Panc1 (cell line): ENCODE measurements at regions of chr12 and their contacts with region 1.

Region 1: DNA sequence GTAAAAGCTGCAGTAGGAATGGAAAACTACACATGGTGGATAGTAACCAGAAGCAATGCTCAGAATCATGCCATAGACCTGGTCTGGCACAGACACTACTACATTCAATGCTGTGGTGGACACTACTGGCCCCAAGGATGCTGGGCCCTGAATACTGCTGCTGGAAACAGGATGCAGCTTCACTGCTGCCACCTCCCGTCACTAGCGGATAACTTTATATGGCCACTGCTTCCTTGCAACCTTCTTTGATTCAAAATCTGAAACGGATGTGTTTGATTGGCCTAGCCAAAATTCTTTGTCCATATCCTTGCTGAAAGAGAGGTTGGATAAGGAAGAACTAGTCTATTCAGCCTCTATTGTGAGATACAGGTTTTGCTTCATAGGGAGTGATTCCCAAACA is 30.7 kb downstream of the ADCY6 start:
- DNase-seq: no peak
- ATAC-seq: peak; percentile 58
- H3K4me3 ChIP-seq: no peak overlapping the region
- H3K27ac ChIP-seq: no peak overlapping the region
- H3K4me1 ChIP-seq: no peaks in the 10 kb centered on the region
- H3K27me3 ChIP-seq: no peaks in the 10 kb centered on the region
- CTCF ChIP-seq: no peak

Region 2: DNA sequence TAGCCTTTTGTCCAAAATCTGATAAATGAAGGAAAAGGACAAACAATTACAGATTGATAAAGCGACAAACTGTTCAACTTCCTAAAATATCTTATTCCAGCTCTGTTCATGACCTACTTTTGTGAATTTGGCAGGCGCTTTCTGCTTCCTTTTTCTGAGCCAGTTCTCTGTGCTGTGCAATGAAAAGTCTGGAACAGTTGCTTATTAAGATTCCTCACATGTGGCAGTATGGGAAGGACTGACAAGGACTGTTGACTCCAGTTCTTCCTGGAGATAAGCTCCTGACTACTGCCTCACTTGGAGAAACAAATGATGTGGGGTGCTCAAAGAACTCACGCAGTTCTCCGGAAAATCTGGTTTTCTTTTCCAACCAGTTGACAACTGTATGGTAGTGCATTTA is 344.2 kb before region 1 on chr12:
- CTCF ChIA-PET with region 1: no interaction called
- POLR2A ChIA-PET with region 1: no interaction called
- in situ Hi-C with region 1: no loop called
- intact Hi-C with region 1: no loop called
- DNase-seq: no peak
- ATAC-seq: no peak
- H3K4me3 ChIP-seq: no peak overlapping the region
- H3K27ac ChIP-seq: no peak overlapping the region
- H3K4me1 ChIP-seq: no peaks in the 10 kb centered on the region
- H3K27me3 ChIP-seq: peaks cover 19% of the 10 kb centered on the region
- CTCF ChIP-seq: no peak

Region 3: DNA sequence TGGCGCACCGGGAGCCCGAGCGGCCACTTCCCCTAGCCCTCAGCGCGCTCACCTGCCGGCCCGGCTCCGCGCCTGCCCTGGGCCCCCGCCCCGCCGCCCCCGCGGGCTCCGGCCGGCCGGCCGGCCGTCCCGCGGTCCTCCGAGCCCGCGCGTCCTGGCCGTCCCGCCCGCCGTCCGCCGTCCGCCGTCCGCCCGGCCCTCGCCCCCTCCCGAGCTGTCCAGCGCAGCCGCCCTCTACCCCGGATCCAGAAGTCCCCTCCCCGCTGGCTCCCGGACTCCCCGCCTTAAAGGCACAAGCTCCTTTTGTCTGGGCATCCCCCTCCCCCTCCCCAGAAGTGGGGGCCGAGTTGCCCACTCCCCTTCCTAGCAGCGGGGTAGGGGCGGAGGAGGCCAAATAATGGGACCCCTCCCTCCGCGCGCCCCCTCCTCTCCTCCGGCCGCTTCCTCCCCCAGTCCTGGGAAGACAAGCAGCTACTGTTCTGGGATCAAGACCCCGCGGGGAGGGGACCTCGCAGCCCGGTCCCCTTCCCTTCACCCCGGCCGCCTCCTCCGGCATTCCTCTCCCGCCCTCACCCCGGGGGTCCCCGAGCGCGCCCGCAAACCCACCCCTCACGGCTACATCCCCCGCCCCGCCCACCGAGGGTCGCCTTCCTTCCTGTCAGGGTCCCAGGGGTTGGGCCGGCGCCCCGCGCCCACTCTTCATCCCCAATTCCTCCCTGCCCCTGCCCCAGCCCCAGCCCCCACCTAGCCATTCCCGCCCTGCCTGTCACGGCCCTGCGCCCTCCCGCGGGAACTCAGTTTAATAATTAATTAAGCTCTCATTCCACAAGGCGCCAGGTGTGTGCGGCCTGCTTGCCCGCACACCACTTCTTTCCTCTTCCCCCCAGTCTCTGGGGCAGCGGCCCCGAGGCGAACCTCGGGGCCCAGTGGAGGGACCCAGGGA is 30.9 kb after region 1 on chr12 and contains the start of gene ADCY6:
- CTCF ChIA-PET with region 1: interaction called, 51 read pairs
- POLR2A ChIA-PET with region 1: no interaction called
- in situ Hi-C with region 1: no loop called
- intact Hi-C with region 1: loop called (anchors 2 kb)
- DNase-seq: no peak
- ATAC-seq: peak; percentile 86
- H3K4me3 ChIP-seq: peak within 1 kb of the TSS; percentile 61 to 70
- H3K27ac ChIP-seq: peak within 1 kb of the TSS; percentile 70
- H3K4me1 ChIP-seq: peaks cover 3% of the 10 kb centered on the region
- H3K27me3 ChIP-seq: no peaks in the 10 kb centered on the region
- CTCF ChIP-seq: no peak
- total RNA-seq, gene ADCY6: 24.1 TPM

Region 4: GRCh38 chr12:48795480-48796455 is 37.5 kb after region 1 on chr12:
- CTCF ChIA-PET with region 1: interaction called, 51 read pairs
- POLR2A ChIA-PET with region 1: no interaction called
- in situ Hi-C with region 1: no loop called
- intact Hi-C with region 1: loop called (anchors 2 kb)
- DNase-seq: peak; percentile 79
- ATAC-seq: peak; percentile 95
- H3K4me3 ChIP-seq: peak overlapping the region in 1 of 2 experiments; percentile 2; a peak in 1 of 4 replicates
- H3K27ac ChIP-seq: no peak overlapping the region
- H3K4me1 ChIP-seq: no peaks in the 10 kb centered on the region
- H3K27me3 ChIP-seq: no peaks in the 10 kb centered on the region
- CTCF ChIP-seq: peak; percentile 92

Region 5: DNA sequence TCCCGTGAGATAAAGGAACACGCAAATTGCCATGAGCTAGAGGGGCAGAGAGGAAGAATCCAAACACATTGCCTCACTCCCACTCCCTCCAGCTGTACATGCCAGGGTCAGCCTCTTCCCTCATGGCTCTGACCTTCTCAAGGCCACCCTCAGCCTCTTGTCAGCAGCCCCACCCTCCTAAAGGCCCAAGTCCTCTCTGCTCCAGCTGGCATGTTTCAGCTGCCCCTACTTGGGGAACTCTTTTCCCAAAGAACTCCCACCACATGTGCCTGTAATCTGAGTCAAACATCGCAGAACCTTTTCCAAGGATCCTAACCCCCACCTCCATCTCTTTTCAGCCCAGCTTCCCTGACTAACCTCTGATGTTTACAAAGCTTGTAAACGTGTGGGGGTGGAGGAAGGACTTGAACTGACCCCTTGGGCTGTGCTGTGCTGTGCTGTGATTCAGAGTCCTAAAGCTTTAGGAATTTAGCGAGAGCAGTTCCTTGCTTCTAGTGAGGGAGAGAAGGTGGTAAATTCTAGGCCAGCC is 52.7 kb after region 1 on chr12:
- CTCF ChIA-PET with region 1: interaction called, 10 read pairs
- POLR2A ChIA-PET with region 1: no interaction called
- in situ Hi-C with region 1: no loop called
- intact Hi-C with region 1: no loop called
- DNase-seq: no peak
- ATAC-seq: no peak
- H3K4me3 ChIP-seq: no peak overlapping the region
- H3K27ac ChIP-seq: no peak overlapping the region; the same call in 1 of the 2 replicates
- H3K4me1 ChIP-seq: peaks cover 14% of the 10 kb centered on the region
- H3K27me3 ChIP-seq: no peaks in the 10 kb centered on the region
- CTCF ChIP-seq: no peak